CD14-positive monocyte (primary cell): ENCODE measurements at regions of chr10 and their contacts with region 1.

Region 1: GRCh38 chr10:86899670-86900276 is 57.6 kb downstream of the MMRN2 start:
- DNase-seq: peak; percentile 20 to 41 (median 39)
- H3K4me3 ChIP-seq: no peak overlapping the region
- H3K4me3 Mint-ChIP-seq: no peak overlapping the region
- H3K27ac ChIP-seq: no peak overlapping the region
- H3K27ac Mint-ChIP-seq: no peak overlapping the region
- H3K4me1 ChIP-seq: no peaks in the 10 kb centered on the region
- H3K4me1 Mint-ChIP-seq: no peaks in the 10 kb centered on the region
- H3K27me3 ChIP-seq: peaks cover 8 to 9% of the 10 kb centered on the region in 2 donors
- H3K27me3 Mint-ChIP-seq: peaks cover 15 to 18% (median 16%) of the 10 kb centered on the region in 3 donors
- CTCF ChIP-seq: peak; percentile 78

Region 2: DNA sequence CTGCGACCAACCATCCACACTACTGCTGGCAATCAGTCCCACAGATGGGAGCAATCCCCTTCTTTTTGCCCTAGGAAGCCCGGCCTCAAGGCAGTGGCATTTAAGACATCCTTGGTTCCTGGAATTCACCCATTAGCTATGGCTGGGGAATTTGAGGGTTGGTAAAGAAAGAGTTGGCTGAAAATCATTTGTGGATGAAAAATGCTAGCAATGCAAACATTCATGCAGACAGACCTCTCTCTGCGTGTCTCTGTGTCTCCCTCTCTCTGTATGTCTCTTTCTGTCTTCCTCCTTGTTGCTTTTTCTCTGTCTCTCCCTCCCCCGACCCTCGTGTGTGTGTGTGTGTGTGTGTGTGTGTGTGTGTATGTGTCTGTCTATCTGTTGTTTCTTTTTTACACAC is 212.1 kb before region 1 on chr10:
- intact Hi-C with region 1: loop called (anchors 2 to 5 kb)
- DNase-seq: no peak
- H3K4me3 ChIP-seq: no peak overlapping the region
- H3K4me3 Mint-ChIP-seq: no peak overlapping the region
- H3K27ac ChIP-seq: no peak overlapping the region
- H3K27ac Mint-ChIP-seq: no peak overlapping the region
- H3K4me1 ChIP-seq: peaks cover 0 to 2% of the 10 kb centered on the region in 2 donors
- H3K4me1 Mint-ChIP-seq: peaks cover 7% of the 10 kb centered on the region
- H3K27me3 ChIP-seq: no peaks in the 10 kb centered on the region
- H3K27me3 Mint-ChIP-seq: peaks cover 3 to 10% (median 7%) of the 10 kb centered on the region in 3 donors
- CTCF ChIP-seq: no peak

Region 3: GRCh38 chr10:86693721-86694369 is 205.9 kb before region 1 on chr10:
- intact Hi-C with region 1: loop called in 1 of 2 experiments (anchors 5 kb)
- DNase-seq: peak in 2 of 3 donors; percentile 21 to 25
- H3K4me3 ChIP-seq: no peak overlapping the region
- H3K4me3 Mint-ChIP-seq: no peak overlapping the region
- H3K27ac ChIP-seq: no peak overlapping the region
- H3K27ac Mint-ChIP-seq: no peak overlapping the region
- H3K4me1 ChIP-seq: no peaks in the 10 kb centered on the region
- H3K4me1 Mint-ChIP-seq: peaks cover 1% of the 10 kb centered on the region
- H3K27me3 ChIP-seq: peaks cover 0 to 3% of the 10 kb centered on the region in 2 donors
- H3K27me3 Mint-ChIP-seq: peaks cover 5 to 14% (median 12%) of the 10 kb centered on the region in 3 donors
- CTCF ChIP-seq: peak; percentile 66

Region 4: GRCh38 chr10:86710987-86711512 is 188.7 kb before region 1 on chr10:
- intact Hi-C with region 1: loop called (anchors 5 to 10 kb)
- DNase-seq: peak; percentile 73 to 78 (median 73)
- H3K4me3 ChIP-seq: peak overlapping the region; percentile 39 to 88 (median 79)
- H3K4me3 Mint-ChIP-seq: peak overlapping the region; percentile 76 to 89
- H3K27ac ChIP-seq: peak overlapping the region; percentile 18 to 67
- H3K27ac Mint-ChIP-seq: peak overlapping the region in 4 of 7 donors; percentile 15 to 92 (median 59)
- H3K4me1 ChIP-seq: peaks cover 12 to 14% of the 10 kb centered on the region in 2 donors
- H3K4me1 Mint-ChIP-seq: peaks cover 11% of the 10 kb centered on the region
- H3K27me3 ChIP-seq: peaks cover 0 to 7% of the 10 kb centered on the region in 2 donors
- H3K27me3 Mint-ChIP-seq: peaks cover 9 to 18% (median 13%) of the 10 kb centered on the region in 3 donors
- CTCF ChIP-seq: peak; percentile 89